Activated CD8-positive, alpha-beta T cell treated with anti-CD3 and anti-CD28 coated beads for 36 hours (primary cell): ENCODE measurements at regions of chr3 and their contacts with region 1.

Region 1: GRCh38 chr3:186617038-186617946 is 4.4 kb downstream of the AHSG start:
- DNase-seq: peak; percentile 93
- ATAC-seq: peak; percentile 99
- H3K4me3 Mint-ChIP-seq: peak overlapping the region; percentile 63
- H3K27ac Mint-ChIP-seq: peak overlapping the region; percentile 68
- H3K4me1 Mint-ChIP-seq: peaks cover 22% of the 10 kb centered on the region
- H3K27me3 Mint-ChIP-seq: peaks cover 32% of the 10 kb centered on the region
- CTCF ChIP-seq: peak; percentile 81

Region 2: GRCh38 chr3:185942907-185943759 is 674.2 kb before region 1 on chr3:
- CTCF ChIA-PET with region 1: interaction called, 15 read pairs
- POLR2A ChIA-PET with region 1: no interaction called
- intact Hi-C with region 1: no loop called
- DNase-seq: peak; percentile 92
- ATAC-seq: peak; percentile 100
- H3K4me3 Mint-ChIP-seq: no peak overlapping the region
- H3K27ac Mint-ChIP-seq: no peak overlapping the region
- H3K4me1 Mint-ChIP-seq: peaks cover 22% of the 10 kb centered on the region
- H3K27me3 Mint-ChIP-seq: peaks cover 8% of the 10 kb centered on the region
- CTCF ChIP-seq: peak; percentile 99

Region 3: DNA sequence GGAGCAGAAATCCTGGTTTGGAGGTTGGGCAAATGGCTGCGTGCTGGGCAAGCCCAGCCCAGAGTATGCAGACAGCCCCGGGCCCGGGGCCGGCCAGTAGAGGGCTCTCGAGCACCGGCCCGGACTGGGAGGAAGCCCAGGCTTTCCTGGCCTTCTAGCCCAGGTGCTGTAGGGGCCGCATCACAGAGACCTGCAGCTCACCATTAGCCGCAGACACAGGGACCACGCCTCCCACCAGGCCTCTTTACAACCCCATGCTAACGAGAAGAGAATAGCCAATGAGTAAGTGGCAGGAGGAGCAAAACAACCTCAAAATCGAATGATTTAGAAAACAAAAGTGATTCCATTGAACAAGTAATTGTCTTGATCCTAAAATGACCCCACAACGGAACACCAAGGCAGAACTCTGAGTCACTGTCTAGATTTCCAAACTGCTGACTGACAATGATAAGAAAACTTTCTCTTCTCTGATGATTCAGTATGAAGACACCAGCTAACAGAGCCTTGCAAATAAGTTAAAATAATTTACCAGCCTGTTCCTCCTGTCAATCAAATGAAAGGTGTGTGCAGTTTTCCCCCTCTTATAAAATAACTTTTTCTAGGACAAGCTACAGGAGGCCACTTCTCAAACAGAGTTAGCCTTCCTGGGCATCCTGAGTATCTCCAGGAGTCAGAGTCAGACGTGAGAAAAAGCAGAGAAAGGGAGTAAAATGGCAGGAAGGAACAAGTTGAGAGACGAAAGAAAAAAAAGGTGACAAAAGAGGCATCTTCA is 357.5 kb before region 1 on chr3:
- CTCF ChIA-PET with region 1: interaction called, 12 read pairs
- POLR2A ChIA-PET with region 1: no interaction called
- intact Hi-C with region 1: no loop called
- DNase-seq: peak; percentile 78
- ATAC-seq: peak; percentile 88
- H3K4me3 Mint-ChIP-seq: peak overlapping the region; percentile 15
- H3K27ac Mint-ChIP-seq: peak overlapping the region; percentile 56
- H3K4me1 Mint-ChIP-seq: peaks cover 20% of the 10 kb centered on the region
- H3K27me3 Mint-ChIP-seq: peaks cover 2% of the 10 kb centered on the region
- CTCF ChIP-seq: peak; percentile 71

Region 4: DNA sequence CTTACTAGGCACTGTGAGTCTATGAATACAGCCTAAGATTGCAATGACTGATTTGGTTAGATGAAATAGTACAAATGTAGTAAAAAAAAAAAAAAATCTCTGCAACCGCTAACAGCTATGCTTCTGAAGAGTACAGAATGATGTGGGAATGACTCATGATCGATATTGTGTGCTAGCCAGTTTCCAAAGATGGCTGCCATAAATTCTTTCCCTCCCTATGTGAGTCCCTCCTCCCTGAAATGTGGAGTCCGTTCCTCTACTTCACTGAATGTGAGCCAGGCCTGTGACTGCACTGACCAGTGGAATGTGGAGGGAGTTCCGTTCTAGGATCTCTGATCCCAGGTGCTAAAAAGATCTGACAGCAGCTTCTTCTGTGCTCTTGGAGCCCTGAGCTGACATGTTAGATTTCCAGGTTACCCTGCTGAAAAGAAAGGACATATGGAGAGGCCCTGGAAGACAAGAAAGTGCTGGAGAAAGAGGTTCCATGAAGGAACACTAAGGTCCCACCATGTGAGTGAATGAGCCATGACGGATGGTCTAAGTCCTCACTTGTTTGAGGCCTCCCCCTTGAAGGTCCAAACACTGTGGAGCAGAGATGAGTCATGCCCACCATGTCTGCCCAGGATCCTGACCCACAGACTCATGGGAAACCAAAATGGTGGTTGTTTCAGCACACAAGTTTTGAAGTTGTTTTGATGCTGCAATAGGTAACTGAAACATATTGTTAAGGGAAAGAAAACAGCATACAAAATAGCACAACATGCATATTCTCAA is 301.5 kb before region 1 on chr3:
- CTCF ChIA-PET with region 1: no interaction called
- POLR2A ChIA-PET with region 1: no interaction called
- intact Hi-C with region 1: no loop called
- DNase-seq: no peak
- ATAC-seq: no peak
- H3K4me3 Mint-ChIP-seq: no peak overlapping the region
- H3K27ac Mint-ChIP-seq: no peak overlapping the region
- H3K4me1 Mint-ChIP-seq: no peaks in the 10 kb centered on the region
- H3K27me3 Mint-ChIP-seq: peaks cover 2% of the 10 kb centered on the region
- CTCF ChIP-seq: no peak

Region 5: DNA sequence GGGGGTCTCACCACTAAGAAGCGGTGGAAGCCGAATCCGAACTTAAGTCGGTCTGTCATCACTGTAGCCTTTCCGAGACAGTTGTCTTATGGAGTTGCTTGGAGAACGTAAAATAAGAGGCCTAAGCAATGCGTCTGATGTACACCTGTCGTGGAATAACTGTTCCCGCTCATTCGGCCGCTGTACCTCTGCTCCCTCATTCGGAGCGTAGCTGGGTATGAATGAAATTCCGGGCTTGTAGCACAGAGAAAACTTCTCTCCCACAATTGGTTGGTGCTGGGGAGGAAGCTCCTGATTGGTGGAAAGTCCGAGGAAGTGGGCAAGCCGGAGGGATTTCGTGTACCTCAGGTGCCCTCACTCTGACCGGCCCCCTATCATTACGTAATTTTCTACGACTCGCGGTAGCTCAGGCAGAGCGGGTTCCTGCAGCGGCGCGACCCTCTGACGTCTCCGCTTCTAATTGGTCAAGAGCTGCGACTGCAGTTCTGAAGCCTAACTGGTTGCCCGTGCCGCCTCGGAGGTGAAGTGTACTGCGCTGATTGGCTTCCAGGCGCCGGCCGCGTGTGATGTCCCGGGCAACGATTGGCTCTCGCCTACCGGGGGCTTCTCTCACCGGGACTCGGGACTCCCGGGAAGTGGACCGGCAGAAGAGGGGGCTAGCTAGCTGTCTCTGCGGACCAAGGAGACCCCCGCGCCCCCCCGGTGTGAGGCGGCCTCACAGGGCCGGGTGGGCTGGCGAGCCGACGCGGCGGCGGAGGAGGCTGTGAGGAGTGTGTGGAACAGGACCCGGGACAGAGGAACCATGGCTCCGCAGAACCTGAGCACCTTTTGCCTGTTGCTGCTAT is 47.0 kb before region 1 on chr3 and contains the start of gene DNAJB11:
- CTCF ChIA-PET with region 1: interaction called, 113 read pairs
- POLR2A ChIA-PET with region 1: interaction called, 5 read pairs
- intact Hi-C with region 1: no loop called
- DNase-seq: peak; percentile 100
- ATAC-seq: peak; percentile 91
- H3K4me3 Mint-ChIP-seq: peak within 1 kb of the TSS; percentile 93
- H3K27ac Mint-ChIP-seq: peak within 1 kb of the TSS; percentile 95
- H3K4me1 Mint-ChIP-seq: peaks cover 54% of the 10 kb centered on the region
- H3K27me3 Mint-ChIP-seq: no peaks in the 10 kb centered on the region
- CTCF ChIP-seq: no peak
- total RNA-seq, gene DNAJB11: 30.0 to 31.5 TPM

Region 6: DNA sequence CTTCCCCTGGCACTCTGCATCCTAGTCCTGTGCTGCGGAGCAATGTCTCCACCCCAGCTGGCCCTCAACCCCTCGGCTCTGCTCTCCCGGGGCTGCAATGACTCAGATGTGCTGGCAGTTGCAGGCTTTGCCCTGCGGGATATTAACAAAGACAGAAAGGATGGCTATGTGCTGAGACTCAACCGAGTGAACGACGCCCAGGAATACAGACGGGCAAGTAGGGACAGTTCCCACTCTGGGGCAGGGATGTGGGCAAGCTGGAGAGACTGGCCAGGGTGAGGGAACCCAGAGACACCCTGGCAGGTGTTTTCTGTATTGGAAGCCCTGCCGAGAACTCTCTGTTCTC is 23.2 kb after region 1 on chr3:
- CTCF ChIA-PET with region 1: interaction called, 103 read pairs
- POLR2A ChIA-PET with region 1: no interaction called
- intact Hi-C with region 1: no loop called
- DNase-seq: no peak
- ATAC-seq: no peak
- H3K4me3 Mint-ChIP-seq: no peak overlapping the region
- H3K27ac Mint-ChIP-seq: no peak overlapping the region
- H3K4me1 Mint-ChIP-seq: peaks cover 25% of the 10 kb centered on the region
- H3K27me3 Mint-ChIP-seq: peaks cover 18% of the 10 kb centered on the region
- CTCF ChIP-seq: no peak

Region 7: GRCh38 chr3:186815435-186815834 is 198.1 kb after region 1 on chr3:
- CTCF ChIA-PET with region 1: interaction called, 129 read pairs
- POLR2A ChIA-PET with region 1: no interaction called
- intact Hi-C with region 1: loop called (anchors 5 kb)
- DNase-seq: no peak
- ATAC-seq: no peak
- H3K4me3 Mint-ChIP-seq: no peak overlapping the region
- H3K27ac Mint-ChIP-seq: no peak overlapping the region
- H3K4me1 Mint-ChIP-seq: peaks cover 6% of the 10 kb centered on the region
- H3K27me3 Mint-ChIP-seq: peaks cover 1% of the 10 kb centered on the region
- CTCF ChIP-seq: no peak